ENCODE measurements at regions of chr5 and their contacts with region 1.

Region 1: DNA sequence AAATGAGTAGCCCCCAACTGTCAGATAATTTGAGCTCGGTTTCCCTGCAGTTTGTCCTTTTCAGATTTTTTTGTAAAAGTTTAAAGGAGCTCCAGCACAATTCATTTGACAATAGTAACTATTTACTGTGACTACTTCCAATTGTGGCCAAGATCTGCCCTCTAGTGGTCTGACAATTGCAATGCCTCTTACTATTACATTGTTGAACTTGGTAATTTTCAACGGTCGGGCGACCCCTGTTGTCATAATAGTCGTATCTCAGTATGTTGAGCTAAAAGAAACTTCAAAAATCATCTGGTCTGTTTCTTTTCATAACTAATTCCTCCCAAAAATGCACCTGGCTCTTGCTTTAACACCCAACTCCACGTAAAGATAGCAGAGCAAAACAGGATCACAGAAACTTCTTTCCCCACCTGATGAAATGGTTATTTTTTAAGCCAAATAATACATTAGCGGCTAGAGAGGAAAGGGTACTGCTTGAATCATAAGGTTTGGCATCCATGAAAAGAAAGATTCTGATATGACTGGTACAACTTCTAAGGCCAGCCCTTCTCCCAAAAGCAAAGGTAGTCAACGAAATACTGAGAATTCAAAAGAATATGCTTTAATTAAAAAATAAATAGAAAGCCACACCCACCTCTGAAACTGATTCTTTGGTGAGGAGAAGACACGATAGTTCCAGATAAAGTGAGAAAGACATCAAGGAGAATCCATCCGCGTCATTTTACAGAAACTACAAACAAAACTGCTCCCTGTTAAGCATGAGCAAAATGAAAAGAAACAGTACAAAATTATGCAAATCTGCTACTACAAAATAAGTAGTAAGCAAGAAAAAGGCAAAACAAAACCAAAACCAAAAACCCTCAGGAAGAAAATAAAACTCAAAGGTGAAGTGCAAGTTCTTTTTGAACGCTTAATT is 76.9 kb upstream of the HTR4 start:
- DNase-seq: peak; percentile 64 to 85
- ATAC-seq: peak; percentile 80 to 93
- H3K4me3 ChIP-seq: peak overlapping the region; percentile 19; the same call in 1 of the 3 replicates
- H3K27ac ChIP-seq: no peak overlapping the region
- H3K4me1 ChIP-seq: peaks cover 11% of the 10 kb centered on the region; the same call in 1 of the 3 replicates
- CTCF ChIP-seq: peak; percentile 99
- EP300 ChIP-seq: no peak
- POLR2A ChIP-seq: no peak
- RAD21 ChIP-seq: peak; percentile 84 to 85

Region 2: DNA sequence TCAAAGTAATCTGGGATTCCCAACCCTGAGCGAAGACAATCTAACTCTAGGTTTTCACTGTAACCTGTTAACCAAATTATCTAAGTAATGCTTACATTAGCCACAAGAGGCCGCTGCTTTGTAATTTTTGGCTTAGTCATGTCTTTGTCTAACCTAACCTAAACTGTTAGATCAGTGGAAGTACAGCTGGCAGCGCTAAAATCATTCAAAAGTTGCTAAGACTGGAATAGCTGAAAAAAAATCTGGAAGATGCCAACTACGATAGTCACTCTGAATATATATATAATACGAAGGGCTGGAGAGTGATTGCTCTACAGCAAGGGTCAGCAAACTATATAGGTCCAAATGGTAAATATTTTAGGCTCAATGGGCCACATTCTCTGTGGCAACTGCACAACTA is 287.2 kb before region 1 on chr5:
- CTCF ChIA-PET with region 1: interaction called, 95 read pairs
- POLR2A ChIA-PET with region 1: no interaction called
- DNase-seq: peak; percentile 42 to 69
- ATAC-seq: peak; percentile 93 to 96
- H3K4me3 ChIP-seq: no peak overlapping the region
- H3K27ac ChIP-seq: no peak overlapping the region
- H3K4me1 ChIP-seq: no peaks in the 10 kb centered on the region
- CTCF ChIP-seq: peak; percentile 83
- EP300 ChIP-seq: no peak
- POLR2A ChIP-seq: no peak
- RAD21 ChIP-seq: peak; percentile 69 to 72

Region 3: GRCh38 chr5:148719605-148720004 is 11.6 kb before region 1 on chr5:
- CTCF ChIA-PET with region 1: interaction called, 22 read pairs
- POLR2A ChIA-PET with region 1: no interaction called
- DNase-seq: no peak
- ATAC-seq: no peak
- H3K4me3 ChIP-seq: no peak overlapping the region
- H3K27ac ChIP-seq: no peak overlapping the region
- H3K4me1 ChIP-seq: no peaks in the 10 kb centered on the region
- CTCF ChIP-seq: no peak
- EP300 ChIP-seq: no peak
- POLR2A ChIP-seq: no peak
- RAD21 ChIP-seq: no peak

Region 4: DNA sequence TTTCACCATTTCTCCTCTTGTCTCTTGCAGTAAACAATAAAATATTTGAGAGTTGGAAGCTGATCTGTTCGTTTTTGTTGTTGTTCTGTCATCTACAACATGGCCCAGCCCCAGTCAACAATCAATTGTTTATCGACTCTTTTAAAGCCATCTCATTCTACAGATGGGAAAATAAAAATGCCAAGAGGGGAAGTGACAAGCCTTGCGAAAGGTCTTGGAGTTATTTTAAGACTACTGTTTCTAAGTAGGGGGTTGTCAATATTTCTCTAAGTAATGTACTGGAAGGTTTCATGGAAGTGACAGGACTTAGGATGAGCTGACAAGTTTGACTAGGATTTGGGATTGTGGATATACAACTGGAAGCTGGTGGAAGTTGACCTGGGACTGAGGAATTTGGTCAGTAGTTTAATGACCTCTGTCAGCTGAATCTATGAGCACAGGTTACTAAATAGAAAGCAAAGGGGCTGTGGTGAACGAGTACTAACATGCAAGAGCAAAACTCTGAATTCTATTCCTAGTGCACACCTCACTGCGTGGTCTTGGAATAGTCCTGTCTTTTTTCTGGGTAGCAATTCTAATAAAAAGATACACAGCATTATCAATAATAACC is 37.7 kb after region 1 on chr5:
- CTCF ChIA-PET with region 1: no interaction called
- POLR2A ChIA-PET with region 1: no interaction called
- DNase-seq: no peak
- ATAC-seq: no peak
- H3K4me3 ChIP-seq: no peak overlapping the region
- H3K27ac ChIP-seq: no peak overlapping the region
- H3K4me1 ChIP-seq: no peaks in the 10 kb centered on the region
- CTCF ChIP-seq: no peak
- EP300 ChIP-seq: no peak
- POLR2A ChIP-seq: no peak
- RAD21 ChIP-seq: no peak

Region 5: GRCh38 chr5:148864113-148864841 is 133.1 kb after region 1 on chr5:
- CTCF ChIA-PET with region 1: no interaction called
- POLR2A ChIA-PET with region 1: no interaction called
- DNase-seq: no peak
- ATAC-seq: no peak
- H3K4me3 ChIP-seq: no peak overlapping the region
- H3K27ac ChIP-seq: no peak overlapping the region
- H3K4me1 ChIP-seq: no peaks in the 10 kb centered on the region
- CTCF ChIP-seq: no peak
- EP300 ChIP-seq: no peak
- POLR2A ChIP-seq: no peak
- RAD21 ChIP-seq: no peak

Region 6: GRCh38 chr5:148998174-148998797 is 267.1 kb after region 1 on chr5:
- CTCF ChIA-PET with region 1: interaction called, 113 read pairs
- POLR2A ChIA-PET with region 1: no interaction called
- DNase-seq: peak; percentile 35 to 65
- ATAC-seq: peak; percentile 57 to 68; a peak in 5 of 6 replicates
- H3K4me3 ChIP-seq: no peak overlapping the region
- H3K27ac ChIP-seq: no peak overlapping the region
- H3K4me1 ChIP-seq: peaks cover 20% of the 10 kb centered on the region
- CTCF ChIP-seq: peak; percentile 78
- EP300 ChIP-seq: no peak
- POLR2A ChIP-seq: no peak
- RAD21 ChIP-seq: peak; percentile 75 to 76

Region 7: GRCh38 chr5:149041242-149041641 is 310.0 kb after region 1 on chr5:
- CTCF ChIA-PET with region 1: interaction called, 432 read pairs
- POLR2A ChIA-PET with region 1: no interaction called
- DNase-seq: no peak
- ATAC-seq: no peak
- H3K4me3 ChIP-seq: no peak overlapping the region
- H3K27ac ChIP-seq: no peak overlapping the region
- H3K4me1 ChIP-seq: peaks cover 7% of the 10 kb centered on the region; the same call in 1 of the 3 replicates
- CTCF ChIP-seq: no peak
- EP300 ChIP-seq: no peak
- POLR2A ChIP-seq: no peak
- RAD21 ChIP-seq: no peak